Gastrocnemius medialis (tissue), 4 donors: ENCODE measurements at regions of chr7 and their contacts with region 1.

Region 1: GRCh38 chr7:75762314-75762917 is 9.6 kb downstream of the CCL26 start:
- DNase-seq: no peak
- ATAC-seq: peak; percentile 89 to 94
- H3K4me3 ChIP-seq: no peak overlapping the region
- H3K27ac ChIP-seq: no peak overlapping the region
- H3K4me1 ChIP-seq: no peaks in the 10 kb centered on the region
- H3K27me3 ChIP-seq: no peaks in the 10 kb centered on the region
- CTCF ChIP-seq: peak; percentile 48 to 72 (median 65)
- POLR2A ChIP-seq: no peak

Region 2: GRCh38 chr7:75054744-75055143 is 707.7 kb before region 1 on chr7:
- in situ Hi-C with region 1: loop called in 1 of 4 experiments (anchors 25 kb)
- intact Hi-C with region 1: no loop called
- DNase-seq: peak; percentile 61 to 81
- ATAC-seq: peak; percentile 80 to 85
- H3K4me3 ChIP-seq: no peak overlapping the region
- H3K27ac ChIP-seq: peak overlapping the region; percentile 65 to 77 (median 68)
- H3K4me1 ChIP-seq: peaks cover 16 to 23% of the 10 kb centered on the region in 2 donors
- H3K27me3 ChIP-seq: no peaks in the 10 kb centered on the region
- CTCF ChIP-seq: no peak
- POLR2A ChIP-seq: no peak